GM13976 (cell line): ENCODE measurements at regions of chr13 and their contacts with region 1.

Region 1: GRCh38 chr13:94444784-94445183 is 34.7 kb downstream of the DCT start:
- DNase-seq: no peak
- CTCF ChIP-seq: no peak

Region 2: DNA sequence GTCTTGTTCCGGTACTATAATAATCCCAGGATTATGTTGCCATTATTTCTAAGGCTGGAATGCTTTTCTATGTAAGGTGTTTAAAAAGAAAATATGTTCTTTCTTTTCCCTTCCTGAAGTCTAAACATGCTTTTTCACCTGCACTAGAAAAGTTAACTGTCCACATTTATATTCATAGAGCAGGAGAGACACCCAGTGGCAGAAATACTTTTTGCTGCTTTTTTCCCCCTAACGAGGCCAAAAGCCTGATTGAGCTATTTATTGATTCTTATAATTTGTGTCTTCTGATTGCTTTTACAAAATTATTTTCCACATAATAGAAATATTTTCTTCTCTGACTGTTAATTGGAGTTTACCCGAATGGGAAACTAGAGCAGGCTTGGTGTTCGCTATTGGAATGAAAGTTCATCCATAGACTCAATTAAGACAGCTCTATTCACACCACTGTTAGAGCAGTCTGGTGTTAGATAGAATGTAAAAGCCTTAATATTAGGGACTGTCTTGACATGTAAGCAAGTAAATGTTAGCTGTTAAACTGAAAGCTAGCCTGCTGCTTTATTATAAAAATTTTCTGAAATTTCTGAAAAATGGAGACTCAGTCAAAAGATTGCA is 172.7 kb after region 1 on chr13:
- in situ Hi-C with region 1: loop called (anchors 10 kb)
- DNase-seq: peak; percentile 21
- CTCF ChIP-seq: peak; percentile 35

Region 3: GRCh38 chr13:94878602-94879165 is 433.9 kb after region 1 on chr13:
- in situ Hi-C with region 1: no loop called
- DNase-seq: no peak
- CTCF ChIP-seq: no peak